ENCODE measurements at regions of chr19 and their contacts with region 1.

Region 1: DNA sequence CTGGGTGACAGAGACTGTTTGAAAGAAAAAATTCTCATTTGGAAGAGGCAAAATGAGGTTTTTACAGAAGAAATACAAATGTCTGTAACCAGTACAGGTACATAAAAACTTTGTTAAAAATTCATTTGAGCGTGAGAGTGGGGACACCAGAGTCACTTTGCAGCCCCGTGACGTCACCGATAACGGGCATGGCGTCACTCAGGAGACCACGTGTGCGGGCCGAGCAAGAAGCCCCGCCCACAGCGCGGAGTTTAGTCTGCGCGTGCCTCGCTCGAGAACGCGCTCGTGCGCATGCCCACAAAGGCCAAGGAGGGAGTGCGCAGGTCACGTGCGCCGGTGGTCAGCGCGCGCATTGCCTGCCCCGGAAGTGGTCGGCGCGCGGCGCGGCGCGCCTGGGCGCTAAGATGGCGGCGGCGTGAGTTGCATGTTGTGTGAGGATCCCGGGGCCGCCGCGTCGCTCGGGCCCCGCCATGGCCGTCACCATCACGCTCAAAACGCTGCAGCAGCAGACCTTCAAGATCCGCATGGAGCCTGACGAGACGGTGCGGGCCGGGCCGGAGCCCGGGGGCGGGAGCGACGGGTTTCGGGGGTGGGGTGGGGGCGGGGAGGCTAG is at the start of gene RAD23A:
- DNase-seq: peak; percentile 83 to 100 (median 92)
- ATAC-seq: peak; percentile 92
- H3K4me3 ChIP-seq: peak within 1 kb of the TSS; percentile 66
- H3K27ac ChIP-seq: peak within 1 kb of the TSS; percentile 88
- H3K4me1 ChIP-seq: peaks cover 16 to 34% of the 10 kb centered on the region in 2 experiments
- H3K27me3 ChIP-seq: no peaks in the 10 kb centered on the region
- CTCF ChIP-seq: no peak
- EP300 ChIP-seq: no peak
- POLR2A ChIP-seq: peak; percentile 85
- RAD21 ChIP-seq: no peak
- polyA plus RNA-seq, gene RAD23A: 9.5 to 40.4 TPM

Region 2: DNA sequence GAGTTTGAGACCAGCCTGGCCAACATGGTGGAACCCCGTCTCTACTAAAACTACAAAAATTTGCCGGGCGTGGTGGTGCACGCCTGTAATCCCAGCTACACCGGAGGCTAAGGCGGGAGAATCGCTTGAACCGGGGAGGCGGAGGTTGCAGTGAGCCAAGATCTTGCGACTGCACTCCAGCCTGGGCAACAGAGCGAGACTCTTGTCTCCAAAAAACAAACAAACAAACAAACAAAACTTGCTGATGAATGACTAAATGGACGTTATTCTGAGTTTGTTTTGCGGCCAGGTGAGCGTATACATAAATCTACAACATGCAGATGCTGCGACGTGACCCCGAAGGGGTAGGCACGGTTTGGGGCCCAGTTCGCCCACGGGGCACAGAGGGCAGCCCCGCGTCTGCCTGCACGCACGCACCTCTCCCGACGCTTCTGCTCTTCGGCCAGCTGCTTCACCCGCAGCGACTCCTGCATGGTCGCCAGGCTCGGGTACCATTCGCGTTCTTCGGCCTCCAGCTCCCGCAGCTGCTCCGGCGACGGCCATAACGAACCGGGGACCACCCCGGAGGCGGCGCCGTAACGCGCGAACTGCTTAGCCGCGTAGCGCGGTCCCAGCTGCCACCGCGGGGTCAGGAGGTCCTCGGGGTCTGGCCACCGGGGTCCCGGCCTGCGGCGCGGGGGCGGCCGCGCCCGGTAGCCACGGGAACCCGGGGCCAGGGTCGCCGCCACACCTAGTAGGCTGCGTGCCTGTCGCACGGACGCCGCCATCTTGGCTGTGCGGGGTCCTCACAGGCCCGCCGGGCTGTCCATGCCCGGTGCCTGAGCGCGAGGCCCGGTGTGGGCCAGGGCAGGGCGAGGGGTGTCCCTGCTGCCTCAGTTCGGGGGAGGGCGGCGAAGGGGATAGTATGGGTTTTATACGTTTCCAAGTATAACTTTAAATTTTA is 11.1 kb after region 1 on chr19 and contains the start of gene GADD45GIP1:
- CTCF ChIA-PET with region 1: no interaction called
- POLR2A ChIA-PET with region 1: interaction called, 14 read pairs
- in situ Hi-C with region 1: no loop called
- intact Hi-C with region 1: no loop called
- DNase-seq: peak; percentile 84 to 91 (median 87)
- ATAC-seq: peak; percentile 92
- H3K4me3 ChIP-seq: peak within 1 kb of the TSS; percentile 96
- H3K27ac ChIP-seq: peak within 1 kb of the TSS; percentile 92
- H3K4me1 ChIP-seq: peaks cover 0 to 39% of the 10 kb centered on the region in 2 experiments; a peak in 3 of 5 replicates
- H3K27me3 ChIP-seq: no peaks in the 10 kb centered on the region
- CTCF ChIP-seq: no peak
- EP300 ChIP-seq: no peak; the same call in 1 of the 2 replicates
- POLR2A ChIP-seq: peak; percentile 88
- RAD21 ChIP-seq: no peak
- polyA plus RNA-seq, gene GADD45GIP1: 5.1 to 6.8 TPM

Region 3: GRCh38 chr19:13146763-13147563 is 201.4 kb after region 1 on chr19:
- CTCF ChIA-PET with region 1: no interaction called
- POLR2A ChIA-PET with region 1: no interaction called
- in situ Hi-C with region 1: no loop called
- intact Hi-C with region 1: no loop called
- DNase-seq: peak in 1 of 4 experiments; percentile 63
- ATAC-seq: no peak
- H3K4me3 ChIP-seq: no peak overlapping the region
- H3K27ac ChIP-seq: no peak overlapping the region; the same call in 2 of the 3 replicates
- H3K4me1 ChIP-seq: peaks cover 9 to 47% of the 10 kb centered on the region in 2 experiments; a peak in 4 of 5 replicates
- H3K27me3 ChIP-seq: no peaks in the 10 kb centered on the region
- CTCF ChIP-seq: no peak
- EP300 ChIP-seq: no peak
- POLR2A ChIP-seq: no peak
- RAD21 ChIP-seq: no peak